ENCODE measurements at regions of chr11 and their contacts with region 1.

Region 1: DNA sequence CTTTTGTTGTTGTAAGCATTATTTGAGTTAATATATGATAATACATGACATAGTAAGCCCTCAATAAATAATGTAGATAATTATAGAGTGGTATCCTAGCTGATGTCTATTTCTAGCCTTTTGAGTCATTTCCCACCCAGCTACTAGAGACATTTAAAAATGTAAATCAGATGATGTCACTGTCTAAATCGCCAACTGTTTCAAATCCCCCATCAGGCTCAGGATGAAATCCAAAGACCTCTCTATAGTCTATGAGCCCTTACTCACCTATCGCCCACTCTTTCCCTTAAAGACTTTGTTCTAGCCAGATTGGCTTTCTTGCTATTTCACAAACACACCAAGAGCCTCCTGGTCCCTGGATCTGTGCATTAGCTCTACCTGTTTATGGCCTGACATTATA is 135.4 kb upstream of the PLET1 start:
- DNase-seq: no peak
- H3K4me3 ChIP-seq: no peak overlapping the region
- H3K27ac ChIP-seq: no peak overlapping the region
- H3K4me1 ChIP-seq: no peaks in the 10 kb centered on the region
- H3K27me3 ChIP-seq: no peaks in the 10 kb centered on the region
- CTCF ChIP-seq: no peak
- POLR2A ChIP-seq: no peak

Region 2: DNA sequence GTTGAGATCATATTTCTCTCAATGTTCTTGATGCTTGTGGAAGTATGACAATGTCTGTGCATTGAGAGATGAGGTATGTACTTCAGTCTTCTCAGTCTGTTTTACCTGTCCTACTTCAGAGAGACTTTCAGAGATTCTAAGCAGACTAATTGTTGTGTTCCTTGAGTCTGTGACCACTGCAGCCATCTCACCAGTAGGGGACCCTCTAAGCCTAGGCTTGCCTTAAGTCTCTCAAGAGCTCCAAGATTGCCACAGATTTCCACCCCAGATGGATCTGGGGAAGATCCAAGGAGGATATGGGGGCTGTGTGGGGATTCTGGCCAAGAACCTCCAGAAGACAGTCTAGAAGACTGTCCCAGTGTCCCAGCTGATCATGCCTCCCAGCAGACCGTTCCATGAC is 44.4 kb after region 1 on chr11:
- intact Hi-C with region 1: loop called (anchors 2 kb)
- DNase-seq: no peak
- H3K4me3 ChIP-seq: no peak overlapping the region
- H3K27ac ChIP-seq: no peak overlapping the region
- H3K4me1 ChIP-seq: no peaks in the 10 kb centered on the region
- H3K27me3 ChIP-seq: no peaks in the 10 kb centered on the region
- CTCF ChIP-seq: no peak
- POLR2A ChIP-seq: no peak